Activated T-helper 1 cell treated with anti-CD3 and anti-CD28 coated beads, Interleukin-12 subunit alpha, Interleukin-12 subunit beta, Interleukin-2, Interleukin-4 antibody, amounts not matched to agents 30 ng/mL and 10 ng/mL and 1 ng/mL, durations not matched to agents 14 hours and 24 hours and 36 hours (primary cell): ENCODE measurements at regions of chr5 and their contacts with region 1.

Region 1: DNA sequence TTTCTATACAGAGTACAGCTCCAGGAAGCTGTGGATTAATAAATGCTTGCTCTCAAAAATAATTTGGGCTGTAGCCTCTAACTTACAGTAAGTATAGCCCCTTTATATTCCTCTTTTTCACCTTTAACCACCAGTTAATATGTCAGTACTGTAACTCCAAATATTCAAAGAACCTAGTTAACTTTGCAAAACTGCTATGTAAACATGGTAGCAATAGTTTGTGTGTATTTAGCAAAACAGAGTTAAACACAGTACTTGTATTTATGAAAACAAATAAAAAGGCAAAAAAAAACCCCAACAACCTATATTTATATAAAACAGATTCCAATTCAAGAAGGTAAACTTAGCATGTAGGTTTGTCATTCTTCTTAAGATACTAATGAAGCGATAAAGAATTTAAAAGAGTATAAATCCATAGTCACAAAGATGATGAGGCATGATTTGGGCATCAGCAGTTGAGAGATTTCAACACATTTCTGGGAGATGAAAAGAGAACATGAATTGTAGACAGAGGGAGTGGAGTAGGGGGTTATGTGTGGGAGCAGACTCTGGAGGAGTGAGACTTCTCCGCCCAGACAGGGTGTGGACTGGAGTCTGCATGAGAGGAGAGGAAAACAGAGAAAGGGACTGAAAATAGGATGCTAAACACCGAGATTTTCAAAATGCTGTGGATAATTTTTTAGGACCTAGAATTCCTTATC is 47.0 kb upstream of the F2RL1 start:
- DNase-seq: no peak
- H3K4me3 Mint-ChIP-seq: no peak overlapping the region
- H3K27ac Mint-ChIP-seq: no peak overlapping the region
- H3K4me1 Mint-ChIP-seq: no peaks in the 10 kb centered on the region
- H3K27me3 Mint-ChIP-seq: no peaks in the 10 kb centered on the region

Region 2: DNA sequence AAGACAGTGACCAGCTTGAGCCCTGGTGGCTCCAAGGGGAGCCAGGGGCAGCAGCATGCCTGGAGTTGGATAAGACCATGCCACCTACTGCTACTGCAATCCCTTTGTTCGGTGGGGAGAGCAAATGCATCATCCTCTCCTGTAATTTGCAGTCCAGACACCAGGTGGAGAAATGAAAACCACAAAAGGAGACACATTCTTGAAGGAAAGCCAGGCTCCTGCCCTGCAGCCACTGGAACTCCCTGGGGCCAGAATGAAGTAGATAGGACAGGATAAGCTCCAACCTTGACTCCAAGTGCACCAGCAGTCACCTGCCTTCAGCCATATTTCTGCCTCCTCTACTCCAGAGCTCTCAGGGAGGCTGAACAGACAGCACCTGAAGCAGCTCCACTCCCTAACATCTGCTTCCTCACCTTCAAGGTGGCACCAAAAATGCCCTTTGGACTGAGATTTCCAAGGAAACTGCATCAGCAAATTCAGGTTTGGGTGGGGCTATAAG is 433.9 kb before region 1 on chr5:
- intact Hi-C with region 1: loop called (anchors 1 kb)
- DNase-seq: peak; percentile 36
- H3K4me3 Mint-ChIP-seq: no peak overlapping the region
- H3K27ac Mint-ChIP-seq: no peak overlapping the region
- H3K4me1 Mint-ChIP-seq: peaks cover 28% of the 10 kb centered on the region
- H3K27me3 Mint-ChIP-seq: no peaks in the 10 kb centered on the region

Region 3: GRCh38 chr5:76601470-76601869 is 170.4 kb before region 1 on chr5:
- intact Hi-C with region 1: loop called (anchors 1 kb)
- DNase-seq: no peak
- H3K4me3 Mint-ChIP-seq: no peak overlapping the region
- H3K27ac Mint-ChIP-seq: no peak overlapping the region
- H3K4me1 Mint-ChIP-seq: peaks cover 25% of the 10 kb centered on the region
- H3K27me3 Mint-ChIP-seq: no peaks in the 10 kb centered on the region

Region 4: GRCh38 chr5:76641514-76642120 is 130.2 kb before region 1 on chr5:
- intact Hi-C with region 1: loop called (anchors 1 kb)
- DNase-seq: peak; percentile 41
- H3K4me3 Mint-ChIP-seq: no peak overlapping the region
- H3K27ac Mint-ChIP-seq: no peak overlapping the region
- H3K4me1 Mint-ChIP-seq: peaks cover 22% of the 10 kb centered on the region
- H3K27me3 Mint-ChIP-seq: no peaks in the 10 kb centered on the region

Region 5: GRCh38 chr5:76715736-76716455 is 56.0 kb before region 1 on chr5 and contains the start of gene F2R:
- intact Hi-C with region 1: loop called (anchors 1 kb)
- DNase-seq: no peak
- H3K4me3 Mint-ChIP-seq: peak within 1 kb of the TSS; percentile 85
- H3K27ac Mint-ChIP-seq: peak within 1 kb of the TSS; percentile 34
- H3K4me1 Mint-ChIP-seq: peaks cover 39% of the 10 kb centered on the region
- H3K27me3 Mint-ChIP-seq: peaks cover 19% of the 10 kb centered on the region
- total RNA-seq, gene F2R: 3.9 and 4.0 TPM in 2 replicates

Region 6: DNA sequence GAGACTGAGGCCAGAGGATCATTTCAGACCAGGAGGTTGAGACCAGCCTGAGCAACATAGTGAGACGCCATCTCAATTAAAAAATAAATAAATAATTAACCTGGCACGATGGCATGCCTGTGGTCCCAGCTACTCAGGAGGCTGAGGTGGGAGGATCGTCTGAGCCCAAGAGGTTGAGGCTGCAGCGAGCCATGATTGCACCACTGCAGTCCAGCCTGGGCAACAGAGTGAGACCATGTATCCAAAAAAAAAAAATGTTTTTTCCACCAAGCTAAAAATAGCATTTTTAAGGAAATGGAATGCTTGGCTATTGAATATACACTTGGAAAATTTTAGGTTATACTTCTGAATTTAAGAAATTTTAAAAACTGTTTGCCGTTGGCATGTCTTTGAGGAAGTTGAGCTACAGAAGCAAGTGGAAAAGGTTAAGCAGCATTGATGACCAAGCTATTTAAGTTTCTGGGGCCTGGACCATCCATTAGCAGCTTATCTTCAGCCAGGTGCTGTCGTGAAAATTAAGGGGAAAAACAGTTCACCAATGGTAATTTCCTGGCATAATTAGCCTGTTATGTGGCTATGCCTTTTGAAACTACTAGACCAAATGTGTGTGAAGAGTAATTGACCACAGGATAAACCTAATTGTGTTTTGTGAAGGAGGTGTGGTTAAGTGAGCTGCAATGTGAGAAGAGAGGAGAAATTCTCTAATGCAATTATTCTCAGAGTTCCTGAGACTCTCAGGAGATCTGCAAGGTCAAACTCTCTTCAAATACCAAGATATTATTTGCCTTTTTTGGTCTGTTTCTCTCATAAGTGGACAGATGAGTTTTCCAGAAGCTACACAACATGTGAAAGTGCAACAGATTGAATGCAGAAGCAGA is 34.9 kb before region 1 on chr5:
- intact Hi-C with region 1: loop called (anchors 1 kb)
- DNase-seq: no peak
- H3K4me3 Mint-ChIP-seq: no peak overlapping the region
- H3K27ac Mint-ChIP-seq: peak overlapping the region; percentile 57
- H3K4me1 Mint-ChIP-seq: peaks cover 63% of the 10 kb centered on the region
- H3K27me3 Mint-ChIP-seq: no peaks in the 10 kb centered on the region

Region 7: DNA sequence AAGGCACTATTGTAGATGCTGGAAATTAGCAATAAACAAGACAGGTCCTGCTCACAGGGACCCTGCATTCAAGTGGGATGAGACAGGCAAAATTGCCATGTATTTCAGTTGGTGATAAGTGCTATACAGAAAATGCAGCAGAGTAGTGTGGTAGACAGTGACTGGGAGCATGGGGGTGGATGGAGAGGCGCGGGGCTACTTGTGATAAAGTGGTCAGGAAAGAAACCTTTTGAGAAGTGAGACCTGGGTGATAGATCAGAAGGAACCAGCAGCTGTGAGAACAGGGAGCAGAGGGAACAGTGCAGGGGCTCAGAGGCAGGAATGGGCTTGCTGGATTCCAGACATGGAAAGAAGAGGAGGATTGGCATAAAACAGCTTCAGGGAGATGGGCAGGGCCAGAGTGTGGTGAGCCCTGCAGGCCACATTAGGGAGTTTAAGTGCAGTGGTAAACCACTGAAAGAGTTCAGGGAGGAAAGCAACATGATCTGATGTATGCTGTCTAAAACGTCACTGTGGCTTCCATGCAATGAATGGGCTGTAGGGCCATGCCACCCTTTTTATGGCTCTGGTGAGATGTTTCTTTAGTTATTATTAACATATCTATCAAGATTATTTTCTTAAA is 188.3 kb after region 1 on chr5:
- intact Hi-C with region 1: no loop called
- DNase-seq: no peak
- H3K4me3 Mint-ChIP-seq: no peak overlapping the region
- H3K27ac Mint-ChIP-seq: peak overlapping the region; percentile 26
- H3K4me1 Mint-ChIP-seq: peaks cover 23% of the 10 kb centered on the region
- H3K27me3 Mint-ChIP-seq: peaks cover 33% of the 10 kb centered on the region